ENCODE measurements at regions of chr18 and their contacts with region 1.

Region 1: GRCh38 chr18:35005963-35006577 is 35.1 kb upstream of the MAPRE2 start:
- DNase-seq: peak; percentile 83
- H3K4me3 ChIP-seq: no peak overlapping the region
- H3K27ac ChIP-seq: no peak overlapping the region
- H3K4me1 ChIP-seq: peaks cover 4% of the 10 kb centered on the region
- H3K27me3 ChIP-seq: no peaks in the 10 kb centered on the region
- CTCF ChIP-seq: peak; percentile 27 to 38
- POLR2A ChIP-seq: no peak

Region 2: DNA sequence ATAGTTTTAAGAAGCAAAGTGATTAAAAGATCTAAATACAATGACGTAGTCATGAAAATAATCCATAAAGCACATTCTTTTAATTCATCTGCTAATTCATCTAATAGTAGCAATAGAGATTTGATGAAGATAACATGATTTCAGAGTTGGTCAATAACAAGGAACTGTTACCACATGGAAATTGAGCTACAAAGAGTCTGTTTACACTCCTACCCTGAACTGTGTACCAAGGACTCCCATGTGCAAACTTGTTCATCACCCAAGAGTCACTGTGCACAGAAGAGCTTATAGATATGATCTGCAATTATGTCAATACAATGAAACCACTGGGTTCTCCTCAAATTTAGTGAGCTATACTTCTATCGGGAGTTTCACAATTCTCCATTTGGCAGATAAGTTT is 374.5 kb before region 1 on chr18:
- CTCF ChIA-PET with region 1: no interaction called
- POLR2A ChIA-PET with region 1: no interaction called
- dilution Hi-C with region 1: no loop called
- intact Hi-C with region 1: no loop called
- DNase-seq: no peak
- H3K4me3 ChIP-seq: no peak overlapping the region
- H3K27ac ChIP-seq: no peak overlapping the region
- H3K4me1 ChIP-seq: peaks cover under 1% of the 10 kb centered on the region
- H3K27me3 ChIP-seq: no peaks in the 10 kb centered on the region
- CTCF ChIP-seq: no peak
- POLR2A ChIP-seq: no peak

Region 3: GRCh38 chr18:34867520-34867919 is 138.6 kb before region 1 on chr18:
- CTCF ChIA-PET with region 1: interaction called, 22 read pairs
- POLR2A ChIA-PET with region 1: no interaction called
- dilution Hi-C with region 1: no loop called
- intact Hi-C with region 1: loop called (anchors 2 kb)
- DNase-seq: peak; percentile 10
- H3K4me3 ChIP-seq: no peak overlapping the region
- H3K27ac ChIP-seq: no peak overlapping the region
- H3K4me1 ChIP-seq: no peaks in the 10 kb centered on the region
- H3K27me3 ChIP-seq: no peaks in the 10 kb centered on the region
- CTCF ChIP-seq: peak; percentile 15 to 34
- POLR2A ChIP-seq: no peak

Region 4: GRCh38 chr18:35029770-35030169 is 23.7 kb after region 1 on chr18:
- CTCF ChIA-PET with region 1: interaction called, 14 read pairs
- POLR2A ChIA-PET with region 1: no interaction called
- dilution Hi-C with region 1: no loop called
- intact Hi-C with region 1: no loop called
- DNase-seq: peak; percentile 34
- H3K4me3 ChIP-seq: no peak overlapping the region
- H3K27ac ChIP-seq: no peak overlapping the region
- H3K4me1 ChIP-seq: peaks cover 13% of the 10 kb centered on the region
- H3K27me3 ChIP-seq: no peaks in the 10 kb centered on the region
- CTCF ChIP-seq: no peak
- POLR2A ChIP-seq: no peak

Region 5: GRCh38 chr18:35071819-35072247 is 65.8 kb after region 1 on chr18:
- CTCF ChIA-PET with region 1: interaction called, 13 read pairs
- POLR2A ChIA-PET with region 1: no interaction called
- dilution Hi-C with region 1: no loop called
- intact Hi-C with region 1: no loop called
- DNase-seq: peak; percentile 41
- H3K4me3 ChIP-seq: no peak overlapping the region
- H3K27ac ChIP-seq: peak overlapping the region; percentile 56
- H3K4me1 ChIP-seq: peaks cover 58% of the 10 kb centered on the region
- H3K27me3 ChIP-seq: no peaks in the 10 kb centered on the region
- CTCF ChIP-seq: no peak
- POLR2A ChIP-seq: no peak

Region 6: DNA sequence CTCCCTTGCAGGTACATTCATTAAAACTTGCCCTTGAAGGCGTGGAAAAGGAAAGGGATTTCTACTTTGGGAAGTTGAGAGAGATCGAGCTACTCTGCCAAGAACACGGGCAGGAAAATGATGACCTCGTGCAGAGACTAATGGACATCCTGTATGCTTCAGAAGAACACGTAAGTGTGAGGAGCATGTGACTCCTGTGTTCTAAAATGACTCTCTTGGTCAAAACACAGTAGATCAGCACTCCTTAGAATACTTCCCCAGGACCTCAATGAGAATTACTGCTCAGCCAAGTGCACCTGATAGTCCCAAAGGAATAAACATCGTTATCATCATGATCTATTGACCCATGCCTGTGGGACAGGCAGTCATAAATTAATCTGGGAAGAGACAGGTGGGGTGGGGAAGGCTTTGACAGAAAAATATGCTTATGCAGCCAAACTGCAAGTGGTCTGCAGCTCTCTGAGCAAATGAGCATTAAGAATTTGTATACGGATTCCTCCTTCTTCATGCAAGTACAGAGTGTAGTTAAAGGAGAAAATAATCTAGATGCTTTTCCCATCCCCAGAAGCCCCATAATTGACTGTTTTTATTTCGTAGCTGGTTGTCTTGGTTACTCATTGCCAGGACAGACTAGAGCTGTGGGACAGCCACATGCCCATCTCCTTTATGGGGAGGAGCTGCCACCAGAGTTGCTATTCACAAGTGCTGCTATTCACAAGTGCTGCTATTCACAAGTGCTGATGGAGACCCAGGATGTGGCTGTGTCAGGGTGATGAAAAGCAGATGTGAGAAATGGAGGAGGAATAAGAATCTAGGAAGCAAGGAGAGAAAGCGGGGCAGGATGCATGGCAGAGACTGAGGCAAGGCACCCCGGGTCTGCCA is 126.2 kb after region 1 on chr18:
- CTCF ChIA-PET with region 1: interaction called, 20 read pairs
- POLR2A ChIA-PET with region 1: no interaction called
- dilution Hi-C with region 1: no loop called
- intact Hi-C with region 1: loop called (anchors 1 kb)
- DNase-seq: peak; percentile 60
- H3K4me3 ChIP-seq: no peak overlapping the region
- H3K27ac ChIP-seq: no peak overlapping the region
- H3K4me1 ChIP-seq: peaks cover 9% of the 10 kb centered on the region
- H3K27me3 ChIP-seq: no peaks in the 10 kb centered on the region
- CTCF ChIP-seq: no peak
- POLR2A ChIP-seq: no peak

Region 7: DNA sequence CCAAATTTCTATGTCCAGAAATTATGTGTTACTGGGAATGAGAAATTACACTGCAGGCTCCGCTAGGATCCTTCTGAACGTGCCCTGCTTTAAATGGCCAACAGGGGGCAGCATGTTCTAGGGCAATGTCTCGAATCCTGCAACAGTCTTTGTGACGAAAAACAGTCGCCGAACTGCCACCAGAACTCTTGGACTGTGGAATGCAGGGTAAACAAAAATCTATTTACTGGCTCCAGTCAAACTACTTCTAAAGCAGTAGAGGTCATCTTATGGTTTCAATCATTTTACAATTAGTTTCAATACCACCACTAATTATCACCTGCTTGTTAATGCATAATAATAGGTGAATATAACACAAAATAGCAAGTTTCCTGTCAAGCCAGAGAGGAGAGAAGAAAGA is 225.0 kb after region 1 on chr18:
- CTCF ChIA-PET with region 1: interaction called, 6 read pairs
- POLR2A ChIA-PET with region 1: no interaction called
- dilution Hi-C with region 1: no loop called
- intact Hi-C with region 1: loop called (anchors 1 kb)
- DNase-seq: peak; percentile 79
- H3K4me3 ChIP-seq: no peak overlapping the region
- H3K27ac ChIP-seq: no peak overlapping the region
- H3K4me1 ChIP-seq: no peaks in the 10 kb centered on the region
- H3K27me3 ChIP-seq: no peaks in the 10 kb centered on the region
- CTCF ChIP-seq: peak; percentile 78 to 82
- POLR2A ChIP-seq: no peak

Region 8: GRCh38 chr18:35355140-35355618 is 349.1 kb after region 1 on chr18:
- CTCF ChIA-PET with region 1: interaction called, 24 read pairs
- POLR2A ChIA-PET with region 1: no interaction called
- dilution Hi-C with region 1: no loop called
- intact Hi-C with region 1: loop called (anchors 1 kb)
- DNase-seq: peak; percentile 86
- H3K4me3 ChIP-seq: no peak overlapping the region
- H3K27ac ChIP-seq: no peak overlapping the region
- H3K4me1 ChIP-seq: no peaks in the 10 kb centered on the region
- H3K27me3 ChIP-seq: no peaks in the 10 kb centered on the region
- CTCF ChIP-seq: peak; percentile 81 to 82
- POLR2A ChIP-seq: no peak